Transverse colon (tissue), 4 donors: ENCODE measurements at regions of chr3 and their contacts with region 1.

Region 1: DNA sequence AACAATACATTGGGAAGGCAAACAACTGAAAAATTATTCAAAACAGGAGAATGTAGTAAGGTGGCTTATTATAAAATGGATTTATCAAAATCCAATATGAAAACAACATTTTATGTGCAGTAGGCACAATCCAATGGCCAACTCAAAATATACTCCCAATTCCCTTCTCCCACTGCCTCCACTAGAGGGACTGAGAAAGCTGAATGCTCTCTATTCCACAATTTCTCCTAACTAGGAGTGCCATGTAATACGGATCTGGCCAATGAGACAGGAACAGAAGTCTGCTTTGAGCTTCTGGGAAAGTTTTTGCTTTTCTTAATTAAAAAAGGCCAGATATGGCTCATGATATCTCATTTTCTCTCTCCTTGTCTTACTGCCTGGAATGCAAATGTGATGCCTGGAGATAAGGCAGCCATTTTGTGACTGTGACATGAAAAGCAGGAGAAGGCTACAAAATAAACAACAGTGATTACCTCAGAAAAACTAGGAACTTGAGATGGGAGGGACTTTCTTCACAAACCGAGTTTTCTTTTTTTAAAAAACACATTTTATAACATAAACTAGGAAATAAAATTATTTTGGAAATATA is 18.8 kb upstream of the VGLL4 start:
- DNase-seq: no peak
- H3K4me3 ChIP-seq: no peak overlapping the region
- H3K27ac ChIP-seq: no peak overlapping the region
- H3K4me1 ChIP-seq: peaks cover 3 to 51% (median 20%) of the 10 kb centered on the region in 4 donors
- H3K27me3 ChIP-seq: no peaks in the 10 kb centered on the region
- CTCF ChIP-seq: peak; percentile 13 to 33 (median 24)
- EP300 ChIP-seq: no peak
- POLR2A ChIP-seq: no peak

Region 2: DNA sequence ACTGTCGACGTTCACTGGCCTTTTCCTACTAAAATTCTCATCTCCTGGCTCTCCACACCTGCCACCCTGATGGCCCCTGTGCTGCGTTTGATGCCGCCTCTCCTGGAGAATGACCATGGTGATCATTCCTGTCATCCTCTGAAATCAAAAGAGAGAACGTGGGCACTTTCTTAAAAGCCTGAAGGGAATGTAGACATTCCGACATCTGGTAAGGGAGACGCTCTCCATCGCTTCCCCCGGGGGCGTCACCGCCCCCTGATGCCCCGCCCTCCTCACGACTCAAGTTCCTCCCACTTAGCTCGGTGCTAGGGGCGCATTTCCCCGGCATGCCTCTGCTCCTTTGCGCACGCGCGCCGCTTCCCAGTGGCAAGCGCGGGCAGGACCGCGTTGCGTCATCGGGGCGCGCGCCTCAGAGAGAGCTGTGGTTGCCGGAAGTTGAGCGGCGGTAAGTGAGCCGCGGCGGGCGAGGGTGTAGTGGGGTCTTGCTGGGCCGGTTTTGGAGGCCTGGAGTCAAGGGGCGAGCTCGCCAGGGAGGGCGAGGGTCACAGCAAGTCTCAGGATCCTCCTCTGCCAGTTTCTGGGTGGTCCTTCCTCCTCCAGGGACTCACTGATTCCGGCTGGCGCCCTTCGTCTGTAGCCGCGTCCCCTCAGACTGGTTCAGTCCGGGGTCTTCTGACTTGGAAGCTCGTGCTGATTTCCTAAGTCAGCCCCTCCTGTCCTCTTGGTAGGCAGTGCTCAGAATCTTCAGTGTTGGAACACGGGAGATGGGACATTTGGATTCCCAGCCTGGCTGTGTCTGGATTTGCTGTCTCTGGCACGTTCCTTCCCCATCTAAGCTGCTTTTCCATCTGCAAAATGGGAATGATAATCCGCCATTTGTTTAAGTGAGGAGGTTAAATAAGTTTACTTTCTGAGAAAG is 390.3 kb before region 1 on chr3 and contains the start of gene ATG7:
- in situ Hi-C with region 1: no loop called
- intact Hi-C with region 1: no loop called
- DNase-seq: peak; percentile 98
- H3K4me3 ChIP-seq: peak within 1 kb of the TSS; percentile 69 to 99 (median 92)
- H3K27ac ChIP-seq: peak within 1 kb of the TSS; percentile 72 to 97 (median 90)
- H3K4me1 ChIP-seq: peaks cover 7 to 19% (median 9%) of the 10 kb centered on the region in 4 donors
- H3K27me3 ChIP-seq: no peaks in the 10 kb centered on the region
- CTCF ChIP-seq: peak in 3 of 5 experiments; percentile 7 to 54 (median 15)
- EP300 ChIP-seq: no peak
- POLR2A ChIP-seq: peak; percentile 95
- total RNA-seq, gene ATG7: 44.5 to 122 (median 75.0) TPM

Region 3: DNA sequence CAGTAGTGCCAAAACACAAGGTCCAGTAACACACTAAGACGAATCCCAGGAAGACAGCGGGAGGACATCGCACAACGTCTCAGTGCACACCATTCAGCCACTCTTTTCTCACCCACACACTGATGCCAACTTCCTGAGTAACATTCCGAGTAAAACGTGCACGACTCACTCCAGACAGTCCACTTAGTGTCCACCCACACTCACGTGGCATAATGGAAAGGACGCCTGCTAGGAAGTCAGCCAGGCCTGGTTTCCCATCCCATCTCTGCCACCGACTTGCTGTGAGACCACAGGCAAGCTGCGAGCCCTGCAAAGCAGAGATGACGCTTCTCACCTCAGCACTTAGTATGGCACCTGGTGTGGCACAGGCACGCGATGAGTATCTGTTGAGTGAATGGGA is 18.0 kb after region 1 on chr3:
- in situ Hi-C with region 1: no loop called
- intact Hi-C with region 1: loop called (anchors 1 kb)
- DNase-seq: no peak
- H3K4me3 ChIP-seq: no peak overlapping the region
- H3K27ac ChIP-seq: no peak overlapping the region
- H3K4me1 ChIP-seq: peaks cover 0 to 3% (median 0%) of the 10 kb centered on the region in 4 donors
- H3K27me3 ChIP-seq: no peaks in the 10 kb centered on the region
- CTCF ChIP-seq: no peak
- EP300 ChIP-seq: no peak
- POLR2A ChIP-seq: no peak